Right ventricle myocardium superior (tissue), 1 donor: ENCODE measurements at regions of chr11 and their contacts with region 1.

Region 1: GRCh38 chr11:1899686-1900085 is 8.0 kb upstream of the PRR33 start:
- DNase-seq: no peak
- ATAC-seq: no peak

Region 2: GRCh38 chr11:1939006-1939625 is 39.4 kb after region 1 on chr11:
- intact Hi-C with region 1: loop called (anchors 5 kb)
- DNase-seq: no peak
- ATAC-seq: no peak

Region 3: DNA sequence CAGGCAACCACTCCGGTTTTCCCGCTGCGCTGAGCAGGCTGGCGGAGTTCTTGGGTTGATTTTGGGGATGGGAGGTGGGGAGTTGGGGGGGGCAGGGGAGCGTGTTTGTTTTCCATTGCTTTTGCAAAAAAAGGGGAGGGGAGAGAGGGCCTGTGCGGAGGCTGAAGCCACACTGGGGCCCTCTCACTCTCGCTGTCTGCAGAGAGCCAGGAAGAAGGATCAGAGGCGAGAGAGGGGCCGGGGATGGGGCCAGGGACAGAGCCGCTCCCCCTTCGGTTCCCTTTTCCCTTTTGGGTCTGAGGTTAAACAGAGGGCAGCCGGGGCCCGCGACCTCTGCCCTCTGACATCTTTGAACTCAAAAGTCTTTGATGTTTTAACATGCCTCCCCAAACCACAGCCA is 115.3 kb after region 1 on chr11:
- intact Hi-C with region 1: no loop called
- DNase-seq: no peak
- ATAC-seq: no peak